Naive thymus-derived CD4-positive, alpha-beta T cell (primary cell): ENCODE measurements at regions of chr2 and their contacts with region 1.

Region 1: DNA sequence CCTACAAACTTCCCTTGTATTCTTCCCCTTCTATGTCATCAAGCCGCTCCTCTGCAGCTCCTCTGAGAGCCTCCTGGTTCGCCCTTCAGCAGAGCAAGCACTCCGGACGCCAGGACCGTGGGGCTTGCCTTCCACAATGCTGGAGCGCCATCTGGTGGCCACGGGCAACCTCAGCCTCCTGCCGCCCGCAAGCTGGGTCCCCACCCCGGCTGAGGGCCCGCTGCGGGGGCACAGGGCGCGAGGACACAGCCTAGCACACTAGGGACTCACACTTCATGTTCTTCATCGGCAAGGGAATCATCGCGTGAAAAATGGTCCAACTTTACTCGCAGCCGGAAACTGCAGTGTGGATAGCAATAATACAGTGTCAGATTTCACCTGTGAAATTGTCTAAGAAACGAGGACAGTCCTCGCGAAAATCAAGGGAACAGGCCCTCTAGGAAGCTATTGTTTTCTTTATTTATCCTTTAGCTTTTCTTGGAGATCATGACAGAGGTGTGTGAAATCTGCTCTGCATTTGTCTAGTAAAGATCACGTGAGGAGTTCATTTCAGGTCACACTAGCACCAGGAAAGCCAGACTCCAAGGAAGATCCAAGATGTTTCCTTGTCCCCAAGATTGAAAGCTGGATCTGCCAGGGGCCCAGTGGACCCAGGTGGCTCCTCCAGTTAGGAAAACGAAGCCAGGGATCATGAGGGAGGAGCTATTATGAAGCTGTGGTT is 5.8 kb downstream of the PRLH start:
- DNase-seq: peak; percentile 66 to 88 (median 81)
- ATAC-seq: peak; percentile 95
- H3K4me3 ChIP-seq: no peak overlapping the region
- H3K4me3 Mint-ChIP-seq: no peak overlapping the region
- H3K27ac ChIP-seq: no peak overlapping the region
- H3K27ac Mint-ChIP-seq: peak overlapping the region in 2 of 9 donors; percentile 20 to 21
- H3K4me1 ChIP-seq: no peaks in the 10 kb centered on the region
- H3K4me1 Mint-ChIP-seq: peaks cover 0 to 7% (median 5%) of the 10 kb centered on the region in 7 donors
- H3K27me3 ChIP-seq: no peaks in the 10 kb centered on the region
- H3K27me3 Mint-ChIP-seq: peaks cover 0 to 6% (median 0%) of the 10 kb centered on the region in 5 donors

Region 2: DNA sequence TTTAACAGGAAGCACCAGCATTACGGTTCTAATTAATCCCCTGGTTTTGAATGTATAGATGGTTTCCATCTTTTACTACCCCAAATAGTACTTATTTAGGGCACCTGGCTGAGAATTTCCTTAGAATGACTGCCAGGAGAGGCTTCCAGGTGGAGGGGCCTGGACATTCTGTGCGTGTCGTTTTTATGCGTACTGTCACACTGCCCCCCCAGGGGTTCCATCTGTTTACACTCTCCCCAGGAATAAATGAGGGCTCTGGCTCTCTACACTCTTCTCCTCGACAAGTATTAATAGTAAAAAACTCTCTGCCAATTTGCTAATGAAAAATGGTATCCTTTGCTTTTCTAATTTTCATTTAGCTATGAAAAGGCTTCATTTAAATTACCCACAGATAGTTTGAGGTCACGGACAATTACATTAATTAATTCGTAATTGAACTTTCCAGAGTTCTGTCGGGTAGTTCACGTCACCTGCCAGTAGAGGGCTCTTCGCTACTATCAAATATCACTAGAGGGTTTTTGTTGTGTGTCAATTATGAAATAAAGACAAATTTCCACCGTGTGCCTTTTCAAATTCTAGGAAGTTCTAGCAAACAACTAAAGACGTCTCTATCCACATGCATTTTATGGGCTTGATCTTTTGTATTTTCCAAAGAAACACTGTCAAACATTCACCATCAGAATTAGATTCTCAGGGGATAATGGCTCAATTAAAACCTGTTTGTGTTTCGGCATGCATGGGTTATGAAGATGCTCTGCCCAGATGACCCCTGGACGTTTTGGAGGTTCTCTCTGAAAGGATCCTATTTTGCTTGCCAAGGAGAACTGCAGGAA is 1219.2 kb before region 1 on chr2:
- CTCF ChIA-PET with region 1: no interaction called
- POLR2A ChIA-PET with region 1: no interaction called
- intact Hi-C with region 1: loop called in 1 of 2 experiments (anchors 1 kb)
- DNase-seq: peak in 5 of 9 donors; percentile 29 to 48 (median 45)
- ATAC-seq: peak; percentile 50
- H3K4me3 ChIP-seq: no peak overlapping the region
- H3K4me3 Mint-ChIP-seq: no peak overlapping the region
- H3K27ac ChIP-seq: no peak overlapping the region
- H3K27ac Mint-ChIP-seq: peak overlapping the region in 1 of 9 donors; percentile 59
- H3K4me1 ChIP-seq: no peaks in the 10 kb centered on the region
- H3K4me1 Mint-ChIP-seq: peaks cover 0 to 7% (median 4%) of the 10 kb centered on the region in 7 donors
- H3K27me3 ChIP-seq: no peaks in the 10 kb centered on the region
- H3K27me3 Mint-ChIP-seq: peaks cover 0 to 14% (median 8%) of the 10 kb centered on the region in 5 donors

Region 3: DNA sequence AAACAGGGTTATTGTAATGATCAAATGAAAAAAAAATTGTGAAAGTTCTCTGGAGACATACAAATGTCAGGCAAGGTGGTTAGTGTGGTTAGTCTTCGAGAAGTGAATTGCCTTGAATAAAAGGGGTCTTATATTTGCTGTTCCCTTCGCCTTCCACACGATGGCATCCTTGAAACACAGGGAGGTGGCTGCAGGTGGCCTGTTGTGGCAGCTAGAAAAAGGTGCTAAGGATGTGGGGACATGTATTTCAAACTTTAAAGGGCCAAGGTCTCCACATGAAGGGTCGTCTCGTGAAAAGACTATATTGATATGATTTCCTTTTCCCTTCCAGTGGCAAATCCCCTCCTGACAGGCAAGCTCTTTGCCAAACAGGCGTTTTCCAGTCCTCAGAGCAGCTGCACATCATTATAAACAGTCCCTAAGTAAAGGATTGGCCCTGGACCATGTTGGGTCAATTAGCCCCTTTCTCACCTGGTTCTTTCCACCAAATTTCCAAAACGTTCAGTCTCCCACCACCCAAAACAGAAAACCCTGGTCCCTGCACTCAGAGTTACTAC is 418.0 kb before region 1 on chr2:
- CTCF ChIA-PET with region 1: interaction called, 16 read pairs
- POLR2A ChIA-PET with region 1: no interaction called
- intact Hi-C with region 1: no loop called
- DNase-seq: peak; percentile 21 to 74 (median 60)
- ATAC-seq: peak; percentile 72
- H3K4me3 ChIP-seq: no peak overlapping the region
- H3K4me3 Mint-ChIP-seq: no peak overlapping the region
- H3K27ac ChIP-seq: no peak overlapping the region
- H3K27ac Mint-ChIP-seq: no peak overlapping the region
- H3K4me1 ChIP-seq: no peaks in the 10 kb centered on the region
- H3K4me1 Mint-ChIP-seq: peaks cover 0 to 23% (median 8%) of the 10 kb centered on the region in 7 donors
- H3K27me3 ChIP-seq: no peaks in the 10 kb centered on the region
- H3K27me3 Mint-ChIP-seq: no peaks in the 10 kb centered on the region

Region 4: DNA sequence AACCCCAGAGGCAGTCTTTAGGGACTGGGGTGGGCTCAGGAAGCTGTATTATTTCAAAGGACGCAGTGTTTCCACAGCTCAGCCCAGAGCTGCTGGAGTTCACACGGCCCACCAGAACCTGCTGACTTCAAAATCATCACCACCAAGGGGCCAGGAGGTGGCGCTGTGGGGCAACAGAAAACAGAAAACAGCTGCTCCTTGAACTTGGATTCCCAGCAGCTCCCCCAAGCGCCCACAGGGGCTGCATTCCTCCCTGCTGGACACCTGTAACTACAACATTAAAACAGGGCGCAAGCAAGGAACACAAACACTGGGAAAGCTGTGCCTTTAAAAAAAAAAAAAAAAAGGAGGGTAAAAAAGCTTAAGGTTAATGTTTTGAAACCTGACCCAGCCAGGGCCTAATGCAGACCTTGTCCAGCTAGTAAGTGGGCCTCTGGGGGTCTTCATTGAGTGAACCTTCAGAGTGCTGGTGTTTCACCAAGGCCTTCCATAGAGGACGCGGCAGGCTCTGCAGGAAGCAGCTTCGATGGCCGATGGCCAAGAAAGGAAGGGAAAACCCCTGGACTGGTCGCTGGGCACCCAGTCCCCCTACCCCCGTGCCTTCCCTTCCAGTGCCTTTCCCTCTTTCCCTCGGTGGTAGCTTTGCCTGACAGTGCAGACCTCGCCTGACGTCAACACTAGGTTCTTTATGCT is 59.3 kb before region 1 on chr2:
- CTCF ChIA-PET with region 1: interaction called, 61 read pairs
- POLR2A ChIA-PET with region 1: interaction called, 4 read pairs
- intact Hi-C with region 1: loop called (anchors 1 kb)
- DNase-seq: peak; percentile 55 to 76 (median 72)
- ATAC-seq: peak; percentile 85
- H3K4me3 ChIP-seq: no peak overlapping the region
- H3K4me3 Mint-ChIP-seq: no peak overlapping the region
- H3K27ac ChIP-seq: no peak overlapping the region
- H3K27ac Mint-ChIP-seq: no peak overlapping the region
- H3K4me1 ChIP-seq: no peaks in the 10 kb centered on the region
- H3K4me1 Mint-ChIP-seq: no peaks in the 10 kb centered on the region
- H3K27me3 ChIP-seq: no peaks in the 10 kb centered on the region
- H3K27me3 Mint-ChIP-seq: peaks cover 0 to 6% (median 0%) of the 10 kb centered on the region in 5 donors

Region 5: GRCh38 chr2:237714690-237715458 is 142.7 kb after region 1 on chr2:
- CTCF ChIA-PET with region 1: no interaction called
- POLR2A ChIA-PET with region 1: no interaction called
- intact Hi-C with region 1: no loop called
- DNase-seq: no peak
- ATAC-seq: no peak
- H3K4me3 ChIP-seq: no peak overlapping the region
- H3K4me3 Mint-ChIP-seq: peak overlapping the region; percentile 7 to 69 (median 45)
- H3K27ac ChIP-seq: peak overlapping the region; percentile 3
- H3K27ac Mint-ChIP-seq: peak overlapping the region; percentile 14 to 91 (median 60)
- H3K4me1 ChIP-seq: peaks cover 0 to 10% of the 10 kb centered on the region in 2 donors
- H3K4me1 Mint-ChIP-seq: peaks cover 41 to 83% (median 72%) of the 10 kb centered on the region in 7 donors
- H3K27me3 ChIP-seq: no peaks in the 10 kb centered on the region
- H3K27me3 Mint-ChIP-seq: no peaks in the 10 kb centered on the region

Region 6: DNA sequence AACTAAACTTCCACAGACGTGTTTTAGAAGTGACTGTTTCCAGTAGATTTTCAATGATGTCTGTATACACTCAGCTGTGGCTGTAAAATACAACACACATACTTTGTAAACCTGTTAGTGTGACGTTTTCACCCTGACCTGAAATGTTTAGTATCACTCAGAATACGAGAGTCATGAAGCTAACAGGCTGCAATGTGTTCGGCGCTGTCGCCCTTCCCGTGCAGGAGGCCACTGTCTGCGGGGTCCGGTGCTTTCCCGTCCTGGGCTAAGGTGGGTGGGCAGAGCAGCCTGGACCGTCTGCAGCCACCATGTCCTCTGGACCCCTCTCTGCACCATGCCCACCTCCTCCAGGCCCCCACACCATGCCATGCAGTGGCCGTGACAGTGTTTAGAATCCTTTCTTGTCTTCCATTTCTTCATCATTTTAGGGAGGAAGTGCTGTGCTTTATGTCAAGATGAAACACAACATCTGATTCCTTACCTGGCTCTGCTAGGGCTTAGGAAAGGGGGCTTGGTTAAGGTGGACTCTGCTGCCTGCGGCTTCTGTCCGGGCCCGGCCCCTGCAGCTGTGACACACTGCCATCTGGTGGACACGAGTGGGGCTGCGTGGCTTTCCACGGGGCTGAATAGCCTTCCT is 172.6 kb after region 1 on chr2:
- CTCF ChIA-PET with region 1: interaction called, 4 read pairs
- POLR2A ChIA-PET with region 1: no interaction called
- intact Hi-C with region 1: loop called in 1 of 2 experiments (anchors 2 kb)
- DNase-seq: peak; percentile 61 to 84 (median 74)
- ATAC-seq: peak; percentile 83
- H3K4me3 ChIP-seq: no peak overlapping the region
- H3K4me3 Mint-ChIP-seq: peak overlapping the region in 1 of 10 donors; percentile 14
- H3K27ac ChIP-seq: peak overlapping the region; percentile 44
- H3K27ac Mint-ChIP-seq: peak overlapping the region; percentile 79 to 94 (median 86)
- H3K4me1 ChIP-seq: peaks cover 4 to 8% of the 10 kb centered on the region in 2 donors
- H3K4me1 Mint-ChIP-seq: peaks cover 30 to 55% (median 46%) of the 10 kb centered on the region in 7 donors
- H3K27me3 ChIP-seq: no peaks in the 10 kb centered on the region
- H3K27me3 Mint-ChIP-seq: no peaks in the 10 kb centered on the region